WTC11 (cell line): ENCODE measurements at regions of chr6 and their contacts with region 1.

Region 1: GRCh38 chr6:27518881-27519795 is 46.2 kb upstream of the ZNF184 start:
- DNase-seq: peak; percentile 67
- ATAC-seq: peak; percentile 91
- H3K4me3 Mint-ChIP-seq: peak overlapping the region; percentile 94
- H3K27ac Mint-ChIP-seq: peak overlapping the region; percentile 84
- H3K4me1 Mint-ChIP-seq: peaks cover 9% of the 10 kb centered on the region
- H3K27me3 Mint-ChIP-seq: peaks cover 31% of the 10 kb centered on the region
- CTCF ChIP-seq: peak; percentile 66

Region 2: DNA sequence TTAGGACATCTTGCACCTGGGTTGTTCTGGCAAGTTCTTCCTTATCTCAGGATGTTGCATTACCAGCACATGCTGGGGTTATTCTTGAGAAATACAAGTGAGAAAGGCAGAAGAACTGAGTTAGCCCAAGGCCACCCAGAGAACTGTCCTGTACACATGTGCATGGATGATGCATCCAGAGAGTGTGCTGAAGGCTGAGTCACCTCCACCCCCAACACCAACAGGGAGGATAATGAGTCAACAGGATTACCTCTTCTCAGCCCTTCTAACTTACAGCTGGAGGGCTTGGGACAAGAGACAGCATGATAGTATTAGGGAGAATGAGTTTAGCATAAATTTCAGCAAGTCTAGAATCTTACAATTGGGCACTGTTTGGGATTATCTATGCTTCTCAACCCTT is 1858.6 kb before region 1 on chr6:
- CTCF ChIA-PET with region 1: no interaction called
- POLR2A ChIA-PET with region 1: no interaction called
- DNase-seq: no peak
- ATAC-seq: no peak
- H3K4me3 Mint-ChIP-seq: no peak overlapping the region
- H3K27ac Mint-ChIP-seq: no peak overlapping the region
- H3K4me1 Mint-ChIP-seq: no peaks in the 10 kb centered on the region
- H3K27me3 Mint-ChIP-seq: no peaks in the 10 kb centered on the region; the same call in 1 of the 2 replicates
- CTCF ChIP-seq: no peak

Region 3: GRCh38 chr6:27312146-27312949 is 206.8 kb before region 1 on chr6 and contains the start of gene POM121L2:
- CTCF ChIA-PET with region 1: interaction called, 15 read pairs
- POLR2A ChIA-PET with region 1: no interaction called
- DNase-seq: peak; percentile 84
- ATAC-seq: peak; percentile 71
- H3K4me3 Mint-ChIP-seq: peak within 1 kb of the TSS; percentile 91
- H3K27ac Mint-ChIP-seq: no peak within 1 kb of the TSS
- H3K4me1 Mint-ChIP-seq: peaks cover 8% of the 10 kb centered on the region
- H3K27me3 Mint-ChIP-seq: peaks cover 65% of the 10 kb centered on the region
- CTCF ChIP-seq: peak; percentile 66
- total RNA-seq, gene POM121L2: 0.13 to 0.16 TPM in 2 of 3 replicates, not detected in the other

Region 4: DNA sequence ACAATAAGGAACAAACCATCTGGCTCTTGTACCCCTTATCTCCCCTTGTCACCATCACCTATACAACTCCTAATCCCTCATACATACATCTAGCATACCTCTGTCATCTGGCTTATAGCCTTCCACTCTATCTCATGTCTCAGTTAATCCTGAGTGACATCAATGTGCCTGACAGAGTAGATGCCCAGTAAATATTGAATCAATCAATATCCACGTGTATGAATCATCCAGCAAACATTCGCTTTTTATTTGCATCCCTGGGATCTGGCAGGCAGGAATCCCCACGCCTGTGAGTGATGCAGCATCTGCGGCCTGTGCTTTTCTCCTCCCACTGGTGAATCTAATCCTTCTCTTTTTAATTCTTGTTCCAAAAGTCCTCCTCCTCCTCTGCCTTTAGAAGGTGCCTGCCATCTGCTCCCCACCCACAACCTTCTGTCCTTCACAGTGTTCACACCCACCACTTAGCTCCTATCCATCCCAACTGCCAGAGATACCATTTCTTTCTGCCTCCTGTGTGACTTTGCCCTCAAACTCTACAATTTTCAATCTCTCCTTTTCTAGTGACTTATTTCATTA is 93.0 kb before region 1 on chr6:
- CTCF ChIA-PET with region 1: no interaction called
- POLR2A ChIA-PET with region 1: no interaction called
- DNase-seq: no peak
- ATAC-seq: no peak
- H3K4me3 Mint-ChIP-seq: no peak overlapping the region
- H3K27ac Mint-ChIP-seq: no peak overlapping the region
- H3K4me1 Mint-ChIP-seq: peaks cover 5% of the 10 kb centered on the region; the same call in 1 of the 2 replicates
- H3K27me3 Mint-ChIP-seq: no peaks in the 10 kb centered on the region; the same call in 1 of the 2 replicates
- CTCF ChIP-seq: no peak

Region 5: GRCh38 chr6:27545271-27546046 is 26.3 kb after region 1 on chr6:
- CTCF ChIA-PET with region 1: interaction called, 11 read pairs
- POLR2A ChIA-PET with region 1: interaction called, 3 read pairs
- DNase-seq: peak; percentile 92
- ATAC-seq: peak; percentile 49
- H3K4me3 Mint-ChIP-seq: peak overlapping the region; percentile 96
- H3K27ac Mint-ChIP-seq: peak overlapping the region; percentile 34; the same call in 1 of the 2 replicates
- H3K4me1 Mint-ChIP-seq: peaks cover 24% of the 10 kb centered on the region
- H3K27me3 Mint-ChIP-seq: peaks cover 30% of the 10 kb centered on the region
- CTCF ChIP-seq: no peak

Region 6: DNA sequence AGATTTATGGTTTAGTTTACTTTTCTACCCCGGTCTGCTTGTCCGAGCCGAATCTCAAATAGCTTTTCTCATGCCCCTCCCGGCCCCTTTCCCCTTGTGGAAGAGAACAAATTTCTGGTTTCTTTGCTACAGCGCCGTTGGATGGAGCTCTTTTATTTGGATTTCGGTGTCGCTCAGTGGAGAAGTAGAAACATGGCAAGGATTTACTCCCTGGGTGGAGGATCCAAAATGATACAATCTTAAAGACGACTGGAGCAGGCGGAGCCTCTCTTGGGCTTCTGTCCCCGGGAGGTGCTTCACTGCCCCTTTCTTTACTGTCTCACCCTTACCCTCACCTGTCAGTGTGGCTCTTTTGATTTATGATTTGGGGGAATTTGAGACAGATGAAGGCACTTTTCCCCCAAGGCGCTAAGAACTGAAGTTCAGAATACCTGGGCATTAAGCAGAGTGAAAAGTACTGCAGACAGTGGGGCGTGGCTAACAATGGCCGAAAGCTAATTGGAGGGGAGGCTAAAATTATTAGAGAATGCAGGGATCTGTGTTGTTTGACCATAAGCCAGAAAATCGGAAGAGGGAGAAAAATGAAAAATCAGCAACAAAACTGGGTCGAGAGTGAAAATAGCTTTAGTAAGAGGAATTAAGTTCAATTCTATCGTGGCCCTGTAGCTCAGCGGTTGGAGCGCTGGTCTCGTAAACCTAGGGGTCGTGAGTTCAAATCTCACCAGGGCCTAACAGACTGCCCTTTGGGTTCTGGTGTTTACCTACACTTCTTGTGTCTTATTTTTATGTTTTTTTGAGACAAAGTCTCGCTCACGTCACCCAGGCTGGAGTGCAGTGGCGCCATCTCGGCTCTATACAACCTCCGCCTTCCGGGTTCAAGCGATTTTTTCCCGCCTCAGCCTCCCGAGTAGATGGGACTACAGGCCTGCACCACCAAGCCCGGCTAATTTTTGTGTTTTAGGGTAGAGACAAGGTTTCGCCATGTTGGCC is 98.9 kb after region 1 on chr6:
- CTCF ChIA-PET with region 1: interaction called, 17 read pairs
- POLR2A ChIA-PET with region 1: no interaction called
- DNase-seq: peak; percentile 60
- ATAC-seq: peak; percentile 78
- H3K4me3 Mint-ChIP-seq: peak overlapping the region; percentile 99
- H3K27ac Mint-ChIP-seq: 0 out of 2 replicates have a peak overlapping the region, but pooled peaks have one; percentile 9
- H3K4me1 Mint-ChIP-seq: peaks cover 10% of the 10 kb centered on the region
- H3K27me3 Mint-ChIP-seq: peaks cover 12% of the 10 kb centered on the region
- CTCF ChIP-seq: no peak

Region 7: GRCh38 chr6:27795697-27796494 is 276.8 kb after region 1 on chr6:
- CTCF ChIA-PET with region 1: interaction called, 12 read pairs
- POLR2A ChIA-PET with region 1: no interaction called
- DNase-seq: no peak
- ATAC-seq: peak; percentile 29
- H3K4me3 Mint-ChIP-seq: peak overlapping the region; percentile 29
- H3K27ac Mint-ChIP-seq: peak overlapping the region; percentile 92
- H3K4me1 Mint-ChIP-seq: peaks cover 15% of the 10 kb centered on the region
- H3K27me3 Mint-ChIP-seq: peaks cover 12% of the 10 kb centered on the region
- CTCF ChIP-seq: peak; percentile 82